Natural killer cell (primary cell): ENCODE measurements at regions of chr19 and their contacts with region 1.

Region 1: GRCh38 chr19:40425450-40426287 is at the start of gene SERTAD1:
- DNase-seq: peak; percentile 100
- ATAC-seq: peak; percentile 88 to 98 (median 88)
- H3K4me3 ChIP-seq: peak within 1 kb of the TSS; percentile 71
- H3K4me3 Mint-ChIP-seq: peak within 1 kb of the TSS; percentile 94
- H3K27ac ChIP-seq: peak within 1 kb of the TSS; percentile 95
- H3K27ac Mint-ChIP-seq: peak within 1 kb of the TSS; percentile 91 to 94
- H3K4me1 ChIP-seq: peaks cover 26% of the 10 kb centered on the region
- H3K4me1 Mint-ChIP-seq: peaks cover 21 to 31% of the 10 kb centered on the region in 2 donors
- H3K27me3 ChIP-seq: no peaks in the 10 kb centered on the region
- H3K27me3 Mint-ChIP-seq: no peaks in the 10 kb centered on the region
- CTCF ChIP-seq: peak; percentile 73
- total RNA-seq, gene SERTAD1: 31.2 to 53.5 (median 38.7) TPM

Region 2: DNA sequence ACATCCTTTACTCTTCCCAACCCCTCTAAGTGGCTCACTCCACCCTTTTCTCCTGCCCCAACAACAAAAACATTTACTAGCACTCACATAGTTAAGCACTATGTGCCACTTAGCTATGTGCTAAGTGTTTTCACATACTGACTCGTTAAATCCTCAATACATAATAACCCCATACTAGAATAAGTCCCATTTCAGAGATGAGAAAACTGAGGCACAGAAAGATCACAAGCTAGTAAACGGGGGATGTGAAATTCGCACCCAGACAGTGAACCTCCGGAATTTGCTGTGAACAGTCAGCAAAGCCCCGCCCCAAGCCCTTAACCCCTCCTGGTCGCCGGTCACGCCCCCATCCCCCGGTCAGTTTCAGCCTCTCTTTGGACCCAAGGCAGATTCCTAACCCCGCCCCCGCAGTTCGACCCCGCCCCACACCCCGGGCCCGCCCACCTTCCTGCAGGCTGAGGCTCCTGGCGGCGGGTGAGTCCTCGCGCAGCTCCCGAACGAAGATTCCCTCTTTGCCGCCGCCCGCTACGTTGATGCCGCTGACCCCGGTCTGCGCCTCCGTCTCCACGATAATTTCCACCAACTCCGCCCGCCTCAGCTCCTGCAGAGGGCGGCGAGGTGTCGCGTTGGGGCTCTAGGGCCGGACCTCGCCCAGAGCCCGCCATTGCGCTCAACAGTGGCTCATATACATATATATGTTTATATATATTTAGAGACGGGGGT is 22.2 kb before region 1 on chr19:
- intact Hi-C with region 1: loop called (anchors 1 kb)
- DNase-seq: peak; percentile 76 to 80
- ATAC-seq: peak; percentile 70 to 84 (median 74)
- H3K4me3 ChIP-seq: peak overlapping the region; percentile 70
- H3K4me3 Mint-ChIP-seq: peak overlapping the region; percentile 97
- H3K27ac ChIP-seq: peak overlapping the region; percentile 66
- H3K27ac Mint-ChIP-seq: peak overlapping the region; percentile 79 to 86
- H3K4me1 ChIP-seq: peaks cover 30% of the 10 kb centered on the region
- H3K4me1 Mint-ChIP-seq: peaks cover 16 to 36% of the 10 kb centered on the region in 2 donors
- H3K27me3 ChIP-seq: no peaks in the 10 kb centered on the region
- H3K27me3 Mint-ChIP-seq: no peaks in the 10 kb centered on the region
- CTCF ChIP-seq: no peak

Region 3: DNA sequence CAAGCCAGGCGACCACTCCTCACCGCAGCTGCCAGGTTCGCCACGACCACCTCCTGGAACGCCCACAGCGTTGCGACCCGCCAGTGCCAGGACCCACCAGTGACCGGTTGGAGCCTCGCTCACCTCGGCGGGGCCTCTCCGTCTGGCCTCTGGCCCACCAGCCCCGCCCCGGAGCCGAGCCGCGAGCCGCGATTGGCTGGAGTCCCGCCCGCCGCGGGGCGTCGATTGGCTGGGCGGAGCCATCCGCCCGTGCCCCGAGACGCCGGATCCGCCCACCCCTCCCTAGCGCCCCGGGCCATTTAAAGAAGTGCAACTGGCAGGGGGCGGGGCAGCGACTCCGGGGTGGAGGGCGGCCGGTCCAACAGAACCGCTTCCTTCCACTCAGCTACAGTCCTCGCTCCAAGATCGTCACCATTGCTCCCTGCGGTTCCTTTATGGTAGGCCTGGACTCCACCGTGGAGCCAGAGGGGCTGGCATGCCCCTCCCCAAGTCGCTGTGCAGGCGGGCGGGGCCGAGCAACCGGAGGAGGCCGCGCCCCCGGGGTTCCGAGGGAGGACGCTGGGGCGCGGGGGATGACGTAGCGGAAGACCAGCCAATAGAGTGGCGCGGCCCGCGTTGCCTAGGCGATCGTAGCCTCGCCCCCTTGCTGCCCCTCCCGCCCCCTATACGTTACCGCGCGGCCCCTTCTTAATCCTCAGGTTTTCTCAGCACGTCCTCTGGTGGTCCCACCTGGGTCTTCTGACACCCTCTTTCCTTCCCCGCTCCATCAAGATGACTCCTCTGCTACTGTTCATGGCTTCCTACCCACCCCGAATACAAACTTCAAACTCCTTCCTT is 18.7 kb after region 1 on chr19 and contains the start of gene SERTAD3:
- intact Hi-C with region 1: loop called (anchors 1 kb)
- DNase-seq: peak; percentile 98
- ATAC-seq: peak; percentile 70 to 87 (median 74)
- H3K4me3 ChIP-seq: peak within 1 kb of the TSS; percentile 91
- H3K4me3 Mint-ChIP-seq: peak within 1 kb of the TSS; percentile 98
- H3K27ac ChIP-seq: peak within 1 kb of the TSS; percentile 89
- H3K27ac Mint-ChIP-seq: peak within 1 kb of the TSS; percentile 92 to 97
- H3K4me1 ChIP-seq: peaks cover 13% of the 10 kb centered on the region
- H3K4me1 Mint-ChIP-seq: peaks cover 25 to 29% of the 10 kb centered on the region in 2 donors
- H3K27me3 ChIP-seq: no peaks in the 10 kb centered on the region
- H3K27me3 Mint-ChIP-seq: no peaks in the 10 kb centered on the region
- CTCF ChIP-seq: no peak
- total RNA-seq, gene SERTAD3: 57.3 to 102 (median 83.3) TPM

Region 4: DNA sequence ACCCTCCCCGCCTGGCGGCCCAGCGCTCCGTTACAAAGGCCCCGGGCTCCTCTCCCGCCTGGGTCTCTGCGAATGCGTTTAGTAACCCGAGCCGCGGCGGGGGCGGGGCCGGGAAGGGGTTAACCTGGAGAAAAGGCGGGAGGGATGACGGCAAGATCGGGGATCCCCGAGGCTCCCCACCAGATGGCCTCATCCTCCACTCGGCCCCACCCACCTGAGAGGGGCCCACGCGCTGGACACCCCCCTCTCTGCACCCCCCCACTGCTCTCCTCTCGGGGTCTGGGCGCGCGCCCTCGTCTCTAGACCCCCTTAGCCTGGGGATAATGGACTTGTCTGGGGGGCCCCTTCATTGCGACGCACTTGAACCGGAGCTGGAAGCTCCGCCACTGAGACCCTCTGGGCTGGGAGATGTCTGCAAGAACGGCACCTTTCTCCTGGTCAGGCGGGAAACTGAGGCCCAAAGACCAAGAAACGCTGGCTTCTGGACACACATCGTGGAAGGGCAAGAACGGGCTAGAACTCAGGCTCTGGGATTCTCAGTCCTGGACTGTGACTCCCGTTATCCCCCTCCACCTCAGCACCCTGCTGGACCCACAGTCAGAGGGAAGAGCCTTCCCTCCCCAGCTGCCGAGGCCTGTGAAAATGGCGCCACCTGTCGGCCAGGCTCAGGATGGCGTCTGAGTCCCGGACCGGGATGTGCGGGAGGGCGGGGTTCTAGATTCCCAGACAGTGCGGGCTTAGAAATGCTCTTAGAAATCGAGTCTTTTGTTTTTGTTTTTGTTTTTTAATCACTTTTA is 172.7 kb after region 1 on chr19:
- intact Hi-C with region 1: loop called (anchors 5 kb)
- DNase-seq: peak; percentile 86 to 91
- ATAC-seq: peak; percentile 71 to 81 (median 76)
- H3K4me3 ChIP-seq: no peak overlapping the region
- H3K4me3 Mint-ChIP-seq: no peak overlapping the region
- H3K27ac ChIP-seq: no peak overlapping the region
- H3K27ac Mint-ChIP-seq: no peak overlapping the region
- H3K4me1 ChIP-seq: peaks cover 71% of the 10 kb centered on the region
- H3K4me1 Mint-ChIP-seq: peaks cover 24 to 53% of the 10 kb centered on the region in 2 donors
- H3K27me3 ChIP-seq: peaks cover 55% of the 10 kb centered on the region
- H3K27me3 Mint-ChIP-seq: peaks cover 14 to 49% of the 10 kb centered on the region in 2 donors
- CTCF ChIP-seq: peak; percentile 96